Heart right ventricle (tissue), 16 donors: ENCODE measurements at regions of chr1 and their contacts with region 1.

Region 1: GRCh38 chr1:165383067-165383466 is 26.6 kb upstream of the LMX1A start:
- DNase-seq: peak; percentile 29 to 42
- ATAC-seq: peak; percentile 49 to 95 (median 81)
- H3K4me3 ChIP-seq: no peak overlapping the region
- H3K27ac ChIP-seq: no peak overlapping the region
- H3K4me1 ChIP-seq: peaks cover 0 to 26% (median 5%) of the 10 kb centered on the region in 9 donors
- H3K27me3 ChIP-seq: peaks cover 0 to 69% (median 0%) of the 10 kb centered on the region in 7 donors
- CTCF ChIP-seq: no peak

Region 2: GRCh38 chr1:165686121-165686970 is 303.3 kb after region 1 on chr1:
- intact Hi-C with region 1: loop called in 2 of 10 experiments (anchors 5 to 10 kb)
- DNase-seq: no peak
- ATAC-seq: no peak
- H3K4me3 ChIP-seq: no peak overlapping the region
- H3K27ac ChIP-seq: peak overlapping the region in 1 of 10 donors; percentile 2
- H3K4me1 ChIP-seq: peaks cover 0 to 12% (median 0%) of the 10 kb centered on the region in 9 donors
- H3K27me3 ChIP-seq: no peaks in the 10 kb centered on the region
- CTCF ChIP-seq: peak in 2 of 9 donors; percentile 15 to 18